Mucosa of descending colon (tissue), 3 donors: ENCODE measurements at regions of chr13 and their contacts with region 1.

Region 1: DNA sequence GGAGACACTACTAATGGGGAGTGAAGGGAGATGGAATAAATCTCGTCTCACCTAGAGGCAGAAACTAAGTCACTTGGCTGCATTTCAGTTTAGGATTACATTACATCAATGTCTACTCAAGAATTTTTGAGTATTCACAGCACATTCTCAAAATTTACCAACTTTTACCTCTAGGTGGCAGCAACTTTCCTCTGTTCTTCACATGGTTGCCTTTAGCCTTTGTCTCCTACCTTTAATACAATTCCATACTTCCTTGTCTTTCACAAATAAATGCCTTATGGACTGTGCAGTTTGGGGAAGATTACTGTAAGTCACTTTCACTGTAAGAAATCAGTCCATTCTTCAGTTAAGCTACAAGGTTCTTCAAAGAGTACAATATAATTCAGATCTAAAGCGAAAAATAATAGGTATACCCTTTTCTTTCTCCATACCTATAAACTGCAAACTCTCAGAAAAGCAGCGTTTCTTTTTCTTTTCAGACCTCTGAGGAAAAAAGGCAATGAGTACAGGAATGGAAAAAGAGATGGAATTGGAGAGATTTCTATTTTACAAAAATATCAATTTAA is 379.4 kb downstream of the KLF12 start:
- DNase-seq: peak in 1 of 3 donors; percentile 82
- ATAC-seq: peak; percentile 87
- H3K4me3 ChIP-seq: no peak overlapping the region
- H3K4me1 ChIP-seq: no peaks in the 10 kb centered on the region
- CTCF ChIP-seq: peak; percentile 39

Region 2: DNA sequence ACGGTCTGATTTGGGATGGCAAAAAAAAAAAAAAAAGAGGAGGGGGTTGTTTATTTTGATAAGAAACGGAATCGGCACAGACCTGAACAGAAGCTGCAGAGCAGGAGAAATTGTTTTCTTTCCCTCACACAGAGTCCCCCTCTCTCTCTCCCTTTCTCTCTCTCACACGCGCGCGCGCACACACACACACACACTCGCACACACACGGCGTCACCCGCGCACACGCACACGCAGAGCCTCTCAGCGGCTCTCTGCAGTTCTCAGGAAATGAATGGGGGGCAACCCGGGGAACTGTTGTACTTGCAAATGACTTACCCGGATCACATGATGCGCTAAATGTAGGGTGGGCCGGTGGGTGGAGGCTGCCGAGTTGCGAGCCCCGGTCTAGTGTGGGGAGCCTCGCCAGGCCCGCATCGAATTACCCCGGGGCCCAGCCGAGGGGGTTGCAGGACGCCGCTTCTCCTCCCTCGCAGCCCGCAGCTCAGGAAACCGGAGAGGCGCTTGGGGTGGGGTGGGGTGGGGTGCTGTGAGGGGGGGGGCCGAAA is 378.9 kb after region 1 on chr13:
- intact Hi-C with region 1: loop called in 1 of 2 experiments (anchors 10 kb)
- DNase-seq: peak; percentile 82 to 93 (median 82)
- ATAC-seq: peak; percentile 53
- H3K4me3 ChIP-seq: peak overlapping the region; percentile 60
- H3K4me1 ChIP-seq: peaks cover 34% of the 10 kb centered on the region
- CTCF ChIP-seq: no peak